ENCODE measurements at regions of chr1 and their contacts with region 1.

Region 1: GRCh38 chr1:35451125-35451528 is 106.1 kb downstream of the KIAA0319L start:
- DNase-seq: peak; percentile 76
- H3K4me3 ChIP-seq: no peak overlapping the region
- H3K27ac ChIP-seq: no peak overlapping the region
- H3K4me1 ChIP-seq: peaks cover 24% of the 10 kb centered on the region
- H3K27me3 ChIP-seq: no peaks in the 10 kb centered on the region
- CTCF ChIP-seq: peak; percentile 91

Region 2: GRCh38 chr1:35564037-35564883 is 113.1 kb after region 1 on chr1:
- CTCF ChIA-PET with region 1: interaction called, 31 read pairs
- POLR2A ChIA-PET with region 1: no interaction called
- intact Hi-C with region 1: loop called (anchors 1 kb)
- DNase-seq: peak; percentile 71
- H3K4me3 ChIP-seq: no peak overlapping the region
- H3K27ac ChIP-seq: no peak overlapping the region
- H3K4me1 ChIP-seq: peaks cover 2% of the 10 kb centered on the region
- H3K27me3 ChIP-seq: no peaks in the 10 kb centered on the region
- CTCF ChIP-seq: peak; percentile 79

Region 3: GRCh38 chr1:35715568-35716002 is 264.5 kb after region 1 on chr1:
- CTCF ChIA-PET with region 1: interaction called, 3 read pairs
- POLR2A ChIA-PET with region 1: no interaction called
- intact Hi-C with region 1: loop called (anchors 5 kb)
- DNase-seq: peak; percentile 91
- H3K4me3 ChIP-seq: no peak overlapping the region
- H3K27ac ChIP-seq: no peak overlapping the region
- H3K4me1 ChIP-seq: peaks cover 13% of the 10 kb centered on the region
- H3K27me3 ChIP-seq: no peaks in the 10 kb centered on the region
- CTCF ChIP-seq: peak; percentile 92

Region 4: DNA sequence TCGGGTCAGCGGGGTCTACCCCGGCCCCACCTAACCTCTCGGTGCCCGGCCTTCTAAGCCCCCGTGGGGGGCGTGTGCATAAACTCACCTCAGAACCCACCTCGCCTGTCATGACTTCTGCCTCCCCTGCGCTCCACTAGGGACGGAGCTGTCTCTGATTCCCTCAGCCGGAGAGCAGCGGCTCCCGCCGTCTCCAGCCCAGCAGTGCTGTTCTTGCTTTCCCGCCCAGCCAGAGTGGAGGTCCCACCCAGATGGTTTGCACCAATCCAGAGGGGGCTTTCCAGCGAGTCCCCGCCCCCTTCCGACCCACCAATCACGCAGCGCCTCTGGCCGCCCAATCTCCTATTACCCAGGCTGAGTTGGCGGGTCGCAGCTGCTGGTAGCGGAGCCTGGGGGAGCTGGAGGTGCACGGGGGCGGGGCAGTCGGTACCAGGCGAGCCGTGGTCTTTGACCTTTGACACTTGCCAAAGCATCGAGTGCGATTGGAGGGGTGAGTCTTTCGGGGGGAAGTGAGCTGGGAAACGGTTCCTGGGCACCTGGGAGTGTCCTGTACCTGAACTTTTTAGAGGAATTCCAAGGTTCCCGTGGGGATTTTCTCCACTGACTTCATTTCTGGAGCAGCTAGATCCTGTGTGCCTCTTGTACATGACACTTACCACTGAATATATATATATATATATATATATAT is 318.8 kb after region 1 on chr1 and contains the start of gene CLSPN:
- CTCF ChIA-PET with region 1: interaction called, 5 read pairs
- POLR2A ChIA-PET with region 1: no interaction called
- intact Hi-C with region 1: loop called (anchors 5 kb)
- DNase-seq: peak; percentile 98
- H3K4me3 ChIP-seq: peak within 1 kb of the TSS; percentile 89
- H3K27ac ChIP-seq: peak within 1 kb of the TSS; percentile 91
- H3K4me1 ChIP-seq: peaks cover 2% of the 10 kb centered on the region
- H3K27me3 ChIP-seq: no peaks in the 10 kb centered on the region
- CTCF ChIP-seq: no peak
- total RNA-seq, gene CLSPN: 72.2 and 84.6 TPM in 2 replicates

Region 5: GRCh38 chr1:35777109-35777508 is 326.0 kb after region 1 on chr1:
- CTCF ChIA-PET with region 1: interaction called, 11 read pairs
- POLR2A ChIA-PET with region 1: no interaction called
- intact Hi-C with region 1: loop called (anchors 5 kb)
- DNase-seq: no peak
- H3K4me3 ChIP-seq: no peak overlapping the region
- H3K27ac ChIP-seq: no peak overlapping the region
- H3K4me1 ChIP-seq: no peaks in the 10 kb centered on the region
- H3K27me3 ChIP-seq: no peaks in the 10 kb centered on the region
- CTCF ChIP-seq: no peak